GM12878 (cell line): ENCODE measurements at regions of chr2 and their contacts with region 1.

Region 1: DNA sequence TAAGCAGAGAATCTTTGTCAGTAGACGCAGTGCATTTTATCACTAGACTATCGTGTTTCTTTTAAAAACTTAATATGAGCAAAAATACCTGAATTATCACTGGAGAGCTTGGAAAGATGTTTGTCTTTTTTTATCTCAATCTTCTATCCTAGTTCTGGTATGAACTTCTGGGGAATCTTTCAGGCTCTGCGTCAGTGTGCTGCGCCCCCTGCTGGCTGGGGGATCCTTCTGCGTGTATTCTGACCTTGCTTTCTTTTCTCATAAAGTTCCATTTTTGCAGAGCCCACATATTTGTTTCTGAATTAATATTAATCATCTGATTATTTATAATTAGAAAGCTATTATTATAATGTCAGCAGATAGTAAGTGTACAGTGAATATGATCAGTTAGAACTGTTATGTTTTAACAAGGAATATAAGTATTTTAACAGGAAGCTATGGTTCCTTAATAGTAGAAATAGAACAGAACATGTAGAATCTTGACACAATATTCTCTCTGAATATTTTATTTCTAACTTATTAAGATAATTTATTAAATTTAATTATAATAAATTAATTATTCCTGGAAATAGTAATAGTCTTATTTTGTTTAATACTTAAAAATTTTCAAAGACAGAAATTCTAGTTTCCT is 945.0 kb upstream of the CRIM1 start:
- DNase-seq: peak; percentile 1
- ATAC-seq: peak; percentile 79
- H3K4me3 ChIP-seq: no peak overlapping the region
- H3K27ac ChIP-seq: no peak overlapping the region
- H3K4me1 ChIP-seq: no peaks in the 10 kb centered on the region
- H3K27me3 ChIP-seq: no peaks in the 10 kb centered on the region
- CTCF ChIP-seq: peak; percentile 66 to 89 (median 82)
- EP300 ChIP-seq: no peak
- POLR2A ChIP-seq: no peak
- RAD21 ChIP-seq: peak; percentile 61

Region 2: DNA sequence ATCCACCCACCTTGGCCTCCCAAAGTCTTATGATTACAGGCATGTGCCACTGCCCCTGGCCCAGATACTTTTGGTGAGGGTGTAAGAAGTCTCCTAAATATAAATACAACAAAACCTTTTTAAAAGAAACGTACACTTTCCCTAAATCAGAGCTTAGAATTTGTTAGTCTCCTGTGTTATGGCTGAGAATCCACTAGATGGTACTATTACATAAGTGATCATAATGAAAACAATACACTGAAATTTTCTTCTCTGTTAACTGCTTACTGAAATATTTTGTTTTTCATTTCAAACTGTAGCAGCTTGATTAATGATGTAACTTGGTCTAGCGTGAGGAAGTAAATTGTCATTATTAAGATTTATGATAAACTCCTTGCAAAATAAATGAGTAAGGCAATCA is 1736.6 kb before region 1 on chr2:
- CTCF ChIA-PET with region 1: interaction called, 11 read pairs
- POLR2A ChIA-PET with region 1: no interaction called
- RAD21 ChIA-PET with region 1: interaction called, 10 read pairs
- SMC1A ChIA-PET with region 1: interaction called, 10 read pairs
- in situ Hi-C with region 1: loop called (anchors 25 kb)
- intact Hi-C with region 1: loop called (anchors 1 kb)
- DNase-seq: no peak
- ATAC-seq: peak; percentile 51
- H3K4me3 ChIP-seq: no peak overlapping the region
- H3K27ac ChIP-seq: no peak overlapping the region
- H3K4me1 ChIP-seq: no peaks in the 10 kb centered on the region
- H3K27me3 ChIP-seq: no peaks in the 10 kb centered on the region; a peak in 1 of 4 replicates
- CTCF ChIP-seq: peak in 2 of 3 experiments; percentile 18 to 44; a peak in 4 of 6 replicates
- EP300 ChIP-seq: no peak
- POLR2A ChIP-seq: no peak
- RAD21 ChIP-seq: peak; percentile 57; the same call in 1 of the 2 replicates

Region 3: DNA sequence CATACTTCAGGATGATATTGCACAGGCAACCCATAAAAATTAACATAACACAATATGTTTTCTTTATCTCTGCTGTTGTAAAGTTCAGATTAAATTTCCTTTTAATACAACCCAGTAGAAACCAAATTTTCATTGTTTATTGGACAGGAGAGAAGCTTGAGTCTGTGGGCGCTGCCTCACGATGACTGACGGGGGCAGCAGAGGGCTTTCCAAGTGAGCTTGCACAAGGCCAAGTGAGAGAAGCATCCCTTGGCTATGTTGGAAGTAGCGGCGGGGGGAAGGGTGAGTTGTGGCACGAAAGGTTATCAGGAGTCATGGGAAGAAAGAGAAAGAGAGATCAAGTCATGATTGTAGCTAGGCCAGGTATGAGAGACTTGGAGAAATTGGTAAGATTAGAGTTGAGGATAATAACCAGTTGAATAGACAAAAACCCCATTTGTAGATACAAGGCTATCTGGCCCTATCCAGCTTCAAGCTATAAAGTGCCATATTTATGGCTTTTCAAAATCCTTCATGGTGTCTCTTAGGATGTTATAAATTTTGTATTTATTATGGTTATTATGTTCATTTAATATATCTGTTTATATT is 1397.7 kb before region 1 on chr2:
- CTCF ChIA-PET with region 1: interaction called, 21 read pairs
- POLR2A ChIA-PET with region 1: no interaction called
- RAD21 ChIA-PET with region 1: interaction called, 4 read pairs
- SMC1A ChIA-PET with region 1: interaction called, 6 read pairs
- in situ Hi-C with region 1: no loop called
- intact Hi-C with region 1: loop called (anchors 2 kb)
- DNase-seq: no peak
- ATAC-seq: peak; percentile 88
- H3K4me3 ChIP-seq: no peak overlapping the region
- H3K27ac ChIP-seq: no peak overlapping the region
- H3K4me1 ChIP-seq: no peaks in the 10 kb centered on the region
- H3K27me3 ChIP-seq: no peaks in the 10 kb centered on the region
- CTCF ChIP-seq: peak; percentile 71 to 76 (median 75)
- EP300 ChIP-seq: no peak
- POLR2A ChIP-seq: no peak
- RAD21 ChIP-seq: peak; percentile 74

Region 4: GRCh38 chr2:34105015-34105767 is 1305.4 kb before region 1 on chr2:
- CTCF ChIA-PET with region 1: interaction called, 10 read pairs
- POLR2A ChIA-PET with region 1: no interaction called
- RAD21 ChIA-PET with region 1: no interaction called
- SMC1A ChIA-PET with region 1: no interaction called
- in situ Hi-C with region 1: loop called (anchors 5 kb)
- intact Hi-C with region 1: no loop called
- DNase-seq: no peak
- ATAC-seq: no peak
- H3K4me3 ChIP-seq: no peak overlapping the region
- H3K27ac ChIP-seq: no peak overlapping the region
- H3K4me1 ChIP-seq: no peaks in the 10 kb centered on the region
- H3K27me3 ChIP-seq: no peaks in the 10 kb centered on the region; a peak in 1 of 4 replicates
- CTCF ChIP-seq: no peak
- EP300 ChIP-seq: no peak
- POLR2A ChIP-seq: no peak
- RAD21 ChIP-seq: no peak

Region 5: DNA sequence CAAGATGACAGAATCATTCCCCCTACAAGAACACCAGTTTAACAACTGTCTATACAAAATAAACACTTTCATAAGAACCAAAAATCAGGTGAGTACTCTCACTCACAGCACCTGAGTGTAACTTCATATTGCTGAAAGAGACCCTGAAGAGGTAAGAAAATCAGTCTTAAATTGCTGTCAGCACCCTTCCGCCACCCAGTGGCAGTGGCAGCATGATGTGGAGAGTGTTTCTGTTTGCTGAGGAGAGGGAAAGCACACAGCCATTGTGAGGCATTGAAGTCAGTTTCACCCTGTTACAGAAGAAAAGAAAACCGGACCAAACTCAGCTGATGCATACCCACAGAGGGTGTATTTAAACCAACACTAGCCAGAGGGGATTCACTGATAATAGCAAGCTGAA is 295.8 kb before region 1 on chr2:
- CTCF ChIA-PET with region 1: no interaction called
- POLR2A ChIA-PET with region 1: no interaction called
- RAD21 ChIA-PET with region 1: no interaction called
- SMC1A ChIA-PET with region 1: no interaction called
- in situ Hi-C with region 1: no loop called
- intact Hi-C with region 1: no loop called
- DNase-seq: no peak
- ATAC-seq: peak; percentile 85
- H3K4me3 ChIP-seq: no peak overlapping the region
- H3K27ac ChIP-seq: no peak overlapping the region
- H3K4me1 ChIP-seq: no peaks in the 10 kb centered on the region
- H3K27me3 ChIP-seq: no peaks in the 10 kb centered on the region
- CTCF ChIP-seq: peak in 2 of 3 experiments; percentile 28 to 47; a peak in 3 of 6 replicates
- EP300 ChIP-seq: no peak
- POLR2A ChIP-seq: no peak
- RAD21 ChIP-seq: no peak

Region 6: DNA sequence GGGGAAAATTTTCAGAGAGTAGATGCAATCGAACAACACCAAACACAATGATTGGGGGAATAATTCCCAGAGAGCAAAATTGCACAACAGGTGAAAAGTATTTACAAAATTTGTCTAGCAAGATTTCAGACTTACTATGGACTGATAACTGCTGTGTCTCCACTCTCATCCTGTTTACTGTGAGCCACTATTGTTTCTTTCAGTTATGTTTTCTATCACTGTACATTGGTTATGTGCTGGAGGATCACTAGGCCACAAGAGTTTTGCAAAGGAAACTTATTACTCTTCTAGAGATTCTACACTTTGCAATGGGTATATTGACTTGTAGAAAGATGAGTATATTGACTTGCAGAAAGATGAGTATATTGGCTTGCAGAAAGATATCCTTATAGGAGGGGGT is 10.9 kb after region 1 on chr2:
- CTCF ChIA-PET with region 1: interaction called, 21 read pairs
- POLR2A ChIA-PET with region 1: no interaction called
- RAD21 ChIA-PET with region 1: no interaction called
- SMC1A ChIA-PET with region 1: interaction called, 3 read pairs
- in situ Hi-C with region 1: no loop called
- intact Hi-C with region 1: no loop called
- DNase-seq: no peak
- ATAC-seq: no peak
- H3K4me3 ChIP-seq: no peak overlapping the region
- H3K27ac ChIP-seq: no peak overlapping the region
- H3K4me1 ChIP-seq: no peaks in the 10 kb centered on the region
- H3K27me3 ChIP-seq: no peaks in the 10 kb centered on the region
- CTCF ChIP-seq: no peak
- EP300 ChIP-seq: no peak
- POLR2A ChIP-seq: no peak
- RAD21 ChIP-seq: no peak